Sciatic nerve (tissue), 2 donors: ENCODE measurements at regions of chr1 and their contacts with region 1.

Region 1: DNA sequence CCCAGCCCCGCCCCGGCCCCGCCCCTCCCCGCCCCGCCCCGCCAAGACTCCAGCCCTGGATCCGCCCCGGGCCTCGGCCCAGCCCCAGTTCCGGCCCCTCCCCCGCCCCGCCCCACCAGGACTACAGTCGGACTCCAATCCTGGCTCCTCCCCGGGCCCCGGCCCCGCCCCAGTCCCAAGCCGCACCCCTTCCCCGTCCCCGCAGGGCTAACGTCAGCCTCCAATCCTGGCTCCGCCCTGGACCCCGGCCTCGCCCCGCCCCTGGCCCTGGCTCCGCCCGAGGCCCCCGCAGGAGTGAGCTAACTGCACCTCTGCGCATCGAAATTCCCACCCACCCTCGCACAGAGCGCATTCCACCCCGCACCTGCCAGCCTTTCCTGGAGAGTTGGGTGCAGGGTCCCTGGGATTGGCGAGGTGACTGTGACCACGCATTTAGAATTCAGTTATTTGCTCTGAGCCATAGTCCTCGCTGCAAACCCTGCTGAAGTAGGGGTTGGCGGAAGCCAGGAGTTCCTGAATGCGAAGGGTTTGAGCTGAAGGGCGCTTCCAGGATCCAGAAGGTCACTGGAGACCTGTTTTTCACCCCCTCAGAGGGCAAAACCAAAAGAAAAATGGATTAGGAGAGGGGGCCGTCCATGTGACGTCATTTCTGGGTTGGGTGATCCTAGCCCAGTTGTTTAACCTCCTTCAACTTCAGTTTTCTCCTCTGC is 588 bp upstream of the IGSF8 start:
- DNase-seq: peak; percentile 99
- ATAC-seq: peak; percentile 91

Region 2: DNA sequence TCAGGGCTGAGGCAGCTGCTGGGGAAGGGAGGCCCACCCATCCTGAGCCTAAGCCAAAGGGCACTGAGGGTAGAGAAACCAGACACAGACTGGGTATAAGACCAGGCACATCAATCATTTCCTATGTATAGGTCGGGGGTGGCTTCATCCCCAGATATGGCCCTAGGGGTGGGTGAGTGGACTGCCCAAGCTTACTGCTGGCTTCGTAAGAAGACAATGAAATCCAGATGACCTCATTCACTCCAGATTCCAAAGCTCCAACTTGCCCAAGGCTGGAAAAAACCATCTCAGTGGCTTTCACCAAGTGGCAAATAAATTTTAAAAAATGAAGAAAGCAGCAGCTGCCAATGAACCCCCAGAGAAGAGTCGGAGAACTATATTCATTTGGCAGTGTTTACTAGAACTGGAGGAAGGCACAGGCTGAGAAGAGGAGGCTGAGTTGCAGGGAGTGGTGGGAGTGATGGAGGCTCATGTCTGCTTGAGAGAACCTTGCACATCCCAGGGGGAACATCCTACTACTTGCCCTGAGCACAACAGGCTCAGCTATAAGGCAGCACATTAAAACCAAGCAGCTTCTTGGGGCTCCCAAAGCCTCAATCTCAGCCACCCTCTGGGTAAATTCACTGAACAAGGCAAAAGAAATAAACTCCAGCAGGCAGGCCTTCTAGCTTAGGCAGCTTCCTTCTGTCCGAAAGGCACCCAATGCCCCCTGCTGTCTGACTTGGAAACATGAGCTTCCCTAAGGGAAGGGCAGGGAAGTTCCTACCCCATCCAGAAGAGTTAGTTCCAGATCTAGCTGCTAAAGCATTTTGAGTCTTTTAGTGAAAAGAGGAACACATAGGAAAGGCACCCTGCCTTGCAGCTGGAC is 120.3 kb after region 1 on chr1:
- intact Hi-C with region 1: loop called (anchors 10 kb)
- DNase-seq: peak; percentile 70
- ATAC-seq: peak; percentile 86

Region 3: GRCh38 chr1:160251687-160252526 is 152.9 kb after region 1 on chr1:
- intact Hi-C with region 1: loop called (anchors 10 kb)
- DNase-seq: peak; percentile 83
- ATAC-seq: peak; percentile 98

Region 4: GRCh38 chr1:161864577-161864976 is 1765.6 kb after region 1 on chr1:
- intact Hi-C with region 1: no loop called
- DNase-seq: peak; percentile 58
- ATAC-seq: peak; percentile 92